ENCODE measurements at regions of chr10 and their contacts with region 1.

Region 1: GRCh38 chr10:91758303-91759146 is 39.7 kb upstream of the TNKS2 start:
- DNase-seq: no peak
- ATAC-seq: peak; percentile 65
- H3K4me3 Mint-ChIP-seq: no peak overlapping the region
- H3K27ac Mint-ChIP-seq: no peak overlapping the region
- H3K4me1 Mint-ChIP-seq: peaks cover 2% of the 10 kb centered on the region
- H3K27me3 Mint-ChIP-seq: peaks cover 18% of the 10 kb centered on the region
- CTCF ChIP-seq: peak; percentile 67

Region 2: DNA sequence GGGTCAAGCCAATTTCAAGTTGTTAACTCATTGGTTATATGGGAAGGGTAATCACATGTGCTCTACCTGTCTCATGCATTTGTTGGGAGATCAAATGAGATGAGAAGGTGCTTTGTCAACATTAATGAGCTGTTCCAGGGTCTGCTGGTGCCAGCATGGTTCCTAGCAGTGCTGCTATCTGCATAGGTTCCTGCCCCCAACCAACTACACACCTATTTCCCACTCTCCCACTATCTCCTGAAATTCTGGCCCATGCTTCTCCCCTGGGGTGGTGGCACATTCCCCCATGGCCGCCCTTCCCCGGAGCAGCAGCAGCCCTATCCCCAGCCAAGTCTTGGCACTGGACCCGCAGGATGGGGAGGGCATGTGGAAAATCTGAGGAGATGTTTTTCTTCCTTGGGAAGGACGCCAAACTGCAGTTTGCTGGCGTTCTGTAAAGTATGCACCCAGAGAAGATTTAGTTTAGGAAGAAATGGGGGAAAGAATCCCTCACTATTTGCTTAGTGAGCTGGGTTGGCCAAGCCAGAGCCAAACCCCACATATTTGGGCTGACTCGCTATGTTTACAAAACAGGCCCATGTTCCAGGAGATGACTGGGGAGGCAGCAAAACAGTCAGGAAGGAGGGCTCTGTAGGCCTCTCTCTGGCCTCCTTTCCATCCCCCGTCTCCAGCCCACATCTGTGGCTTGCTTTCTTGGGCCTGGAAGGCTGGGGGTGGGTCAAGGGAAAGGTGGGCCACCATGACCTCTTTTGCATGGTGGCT is 168.2 kb before region 1 on chr10:
- CTCF ChIA-PET with region 1: no interaction called
- POLR2A ChIA-PET with region 1: no interaction called
- intact Hi-C with region 1: no loop called
- DNase-seq: no peak
- ATAC-seq: no peak
- H3K4me3 Mint-ChIP-seq: no peak overlapping the region
- H3K27ac Mint-ChIP-seq: no peak overlapping the region
- H3K4me1 Mint-ChIP-seq: no peaks in the 10 kb centered on the region
- H3K27me3 Mint-ChIP-seq: peaks cover 27% of the 10 kb centered on the region
- CTCF ChIP-seq: no peak

Region 3: GRCh38 chr10:91787810-91788209 is 29.3 kb after region 1 on chr10:
- CTCF ChIA-PET with region 1: no interaction called
- POLR2A ChIA-PET with region 1: no interaction called
- intact Hi-C with region 1: no loop called
- DNase-seq: no peak
- ATAC-seq: no peak
- H3K4me3 Mint-ChIP-seq: no peak overlapping the region
- H3K27ac Mint-ChIP-seq: no peak overlapping the region
- H3K4me1 Mint-ChIP-seq: no peaks in the 10 kb centered on the region
- H3K27me3 Mint-ChIP-seq: no peaks in the 10 kb centered on the region
- CTCF ChIP-seq: no peak

Region 4: DNA sequence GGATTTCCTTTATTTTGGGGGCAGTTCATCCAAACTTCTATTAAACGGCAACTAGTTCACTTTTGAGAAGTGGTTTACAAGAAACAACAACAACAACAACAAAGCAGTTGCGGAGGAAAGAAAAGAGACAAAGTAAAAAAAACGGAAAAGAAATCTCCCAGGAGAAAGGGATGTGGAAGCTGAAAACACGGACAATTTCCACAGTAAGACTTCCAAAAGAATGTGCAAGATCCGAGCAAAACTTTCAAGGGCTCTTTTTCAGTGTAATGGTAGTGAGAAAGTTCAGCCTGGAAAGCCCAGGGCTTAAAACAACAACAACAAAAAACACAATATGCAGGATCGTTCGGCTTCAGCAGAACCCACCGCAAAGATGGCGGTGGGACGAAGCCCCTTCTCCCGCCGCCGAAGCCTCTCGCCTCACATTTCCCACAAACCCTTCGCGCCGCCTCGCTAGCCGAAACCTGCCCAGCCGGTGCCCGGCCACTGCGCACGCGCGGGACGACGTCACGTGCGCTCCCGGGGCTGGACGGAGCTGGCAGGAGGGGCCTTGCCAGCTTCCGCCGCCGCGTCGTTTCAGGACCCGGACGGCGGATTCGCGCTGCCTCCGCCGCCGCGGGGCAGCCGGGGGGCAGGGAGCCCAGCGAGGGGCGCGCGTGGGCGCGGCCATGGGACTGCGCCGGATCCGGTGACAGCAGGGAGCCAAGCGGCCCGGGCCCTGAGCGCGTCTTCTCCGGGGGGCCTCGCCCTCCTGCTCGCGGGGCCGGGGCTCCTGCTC is 39.5 kb after region 1 on chr10 and contains the start of gene TNKS2:
- CTCF ChIA-PET with region 1: interaction called, 14 read pairs
- POLR2A ChIA-PET with region 1: no interaction called
- intact Hi-C with region 1: no loop called
- DNase-seq: peak; percentile 93
- ATAC-seq: peak; percentile 67
- H3K4me3 Mint-ChIP-seq: peak within 1 kb of the TSS; percentile 89
- H3K27ac Mint-ChIP-seq: peak within 1 kb of the TSS; percentile 99
- H3K4me1 Mint-ChIP-seq: peaks cover 51% of the 10 kb centered on the region
- H3K27me3 Mint-ChIP-seq: no peaks in the 10 kb centered on the region
- CTCF ChIP-seq: no peak
- total RNA-seq, gene TNKS2: 22.1 to 22.8 TPM

Region 5: GRCh38 chr10:91983416-91983815 is 224.9 kb after region 1 on chr10:
- CTCF ChIA-PET with region 1: no interaction called
- POLR2A ChIA-PET with region 1: no interaction called
- intact Hi-C with region 1: no loop called
- DNase-seq: no peak
- ATAC-seq: no peak
- H3K4me3 Mint-ChIP-seq: no peak overlapping the region
- H3K27ac Mint-ChIP-seq: no peak overlapping the region
- H3K4me1 Mint-ChIP-seq: peaks cover 24% of the 10 kb centered on the region
- H3K27me3 Mint-ChIP-seq: no peaks in the 10 kb centered on the region
- CTCF ChIP-seq: no peak